HEK293 (cell line): ENCODE measurements at regions of chr3 and their contacts with region 1.

Region 1: DNA sequence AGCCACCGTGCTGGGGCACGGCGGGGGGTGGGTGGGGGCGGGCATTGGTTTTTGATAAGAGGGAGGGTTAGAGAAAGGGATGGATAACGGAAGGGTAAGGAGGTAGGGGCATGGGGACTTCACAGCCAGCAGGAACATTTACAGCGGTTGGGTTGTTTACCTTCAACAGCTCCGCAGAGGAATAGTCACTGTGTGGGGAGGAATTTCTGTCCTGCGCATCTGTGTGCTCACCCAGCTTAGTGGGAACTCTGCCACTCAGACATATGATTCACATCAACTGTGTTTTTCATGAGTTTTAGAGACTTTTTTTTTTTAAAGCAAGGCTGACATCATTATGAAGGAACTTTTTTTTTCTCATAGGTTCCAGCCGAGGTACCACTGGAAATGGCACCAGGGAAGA is 19.6 kb downstream of the CHRD start:
- H3K4me3 ChIP-seq: no peak overlapping the region
- H3K27ac ChIP-seq: no peak overlapping the region
- H3K4me1 ChIP-seq: no peaks in the 10 kb centered on the region
- CTCF ChIP-seq: no peak

Region 2: GRCh38 chr3:184371570-184372018 is 27.8 kb before region 1 on chr3:
- CTCF ChIA-PET with region 1: interaction called, 10 read pairs
- POLR2A ChIA-PET with region 1: no interaction called
- H3K4me3 ChIP-seq: no peak overlapping the region
- H3K27ac ChIP-seq: no peak overlapping the region
- H3K4me1 ChIP-seq: no peaks in the 10 kb centered on the region
- CTCF ChIP-seq: peak; percentile 86

Region 3: GRCh38 chr3:184461219-184461618 is 61.8 kb after region 1 on chr3:
- CTCF ChIA-PET with region 1: interaction called, 3 read pairs
- POLR2A ChIA-PET with region 1: interaction called, 10 read pairs
- H3K4me3 ChIP-seq: no peak overlapping the region
- H3K27ac ChIP-seq: no peak overlapping the region
- H3K4me1 ChIP-seq: no peaks in the 10 kb centered on the region
- CTCF ChIP-seq: no peak